Mammary epithelial cell (primary cell): ENCODE measurements at regions of chr6 and their contacts with region 1.

Region 1: DNA sequence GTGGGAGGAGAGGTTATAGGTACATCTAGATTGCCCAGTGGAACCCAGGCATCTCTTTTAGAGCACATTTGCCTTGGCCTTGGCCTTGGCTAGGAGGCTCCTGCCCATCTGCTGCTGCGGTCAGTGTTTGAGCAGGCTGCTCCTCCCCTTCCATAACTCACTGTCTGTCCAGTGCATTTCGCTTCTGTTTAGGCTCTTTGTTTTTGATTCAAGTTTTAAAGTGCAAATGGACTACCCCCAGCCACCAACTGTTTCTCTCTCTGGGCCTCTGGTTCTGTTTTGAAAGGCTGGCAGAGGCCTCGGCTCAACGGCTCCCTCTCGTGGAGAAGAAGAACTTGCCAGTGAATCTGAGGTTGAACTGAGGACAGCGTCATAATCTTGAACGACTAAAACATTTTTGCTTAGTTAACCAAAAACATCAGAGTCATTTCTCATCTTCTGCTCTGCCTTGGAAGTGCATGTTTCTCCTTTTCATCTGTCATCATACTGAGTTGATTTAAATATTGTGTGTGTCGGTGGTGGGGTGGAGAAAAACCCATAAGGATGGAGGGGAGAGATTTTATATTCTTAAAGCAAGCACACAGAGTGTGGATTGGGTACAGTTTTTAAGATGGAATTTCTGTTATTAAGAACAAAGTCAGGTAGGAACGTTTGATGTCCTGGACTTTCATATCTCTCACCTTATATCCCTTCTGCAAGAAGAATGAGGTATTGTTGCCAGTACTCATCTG is 171.4 kb downstream of the DTNBP1 start:
- DNase-seq: peak; percentile 29
- H3K4me3 ChIP-seq: no peak overlapping the region
- H3K27ac ChIP-seq: no peak overlapping the region
- H3K4me1 ChIP-seq: no peaks in the 10 kb centered on the region
- H3K27me3 ChIP-seq: no peaks in the 10 kb centered on the region
- CTCF ChIP-seq: peak; percentile 91 to 94

Region 2: GRCh38 chr6:14129575-14129974 is 1361.8 kb before region 1 on chr6:
- CTCF ChIA-PET with region 1: no interaction called
- dilution Hi-C with region 1: no loop called
- in situ Hi-C with region 1: no loop called
- intact Hi-C with region 1: loop called (anchors 5 kb)
- DNase-seq: peak; percentile 48
- H3K4me3 ChIP-seq: no peak overlapping the region
- H3K27ac ChIP-seq: no peak overlapping the region
- H3K4me1 ChIP-seq: no peaks in the 10 kb centered on the region
- H3K27me3 ChIP-seq: no peaks in the 10 kb centered on the region
- CTCF ChIP-seq: peak; percentile 38 to 59

Region 3: GRCh38 chr6:14192216-14192788 is 1299.1 kb before region 1 on chr6:
- CTCF ChIA-PET with region 1: no interaction called
- dilution Hi-C with region 1: no loop called
- in situ Hi-C with region 1: no loop called
- intact Hi-C with region 1: loop called (anchors 5 kb)
- DNase-seq: no peak
- H3K4me3 ChIP-seq: no peak overlapping the region
- H3K27ac ChIP-seq: no peak overlapping the region
- H3K4me1 ChIP-seq: no peaks in the 10 kb centered on the region
- H3K27me3 ChIP-seq: no peaks in the 10 kb centered on the region
- CTCF ChIP-seq: peak; percentile 21 to 32

Region 4: GRCh38 chr6:15327271-15327670 is 164.1 kb before region 1 on chr6:
- CTCF ChIA-PET with region 1: no interaction called
- dilution Hi-C with region 1: no loop called
- in situ Hi-C with region 1: no loop called
- intact Hi-C with region 1: loop called (anchors 5 kb)
- DNase-seq: no peak
- H3K4me3 ChIP-seq: no peak overlapping the region
- H3K27ac ChIP-seq: no peak overlapping the region
- H3K4me1 ChIP-seq: peaks cover 54% of the 10 kb centered on the region
- H3K27me3 ChIP-seq: no peaks in the 10 kb centered on the region
- CTCF ChIP-seq: peak in 1 of 2 donors; percentile 28

Region 5: DNA sequence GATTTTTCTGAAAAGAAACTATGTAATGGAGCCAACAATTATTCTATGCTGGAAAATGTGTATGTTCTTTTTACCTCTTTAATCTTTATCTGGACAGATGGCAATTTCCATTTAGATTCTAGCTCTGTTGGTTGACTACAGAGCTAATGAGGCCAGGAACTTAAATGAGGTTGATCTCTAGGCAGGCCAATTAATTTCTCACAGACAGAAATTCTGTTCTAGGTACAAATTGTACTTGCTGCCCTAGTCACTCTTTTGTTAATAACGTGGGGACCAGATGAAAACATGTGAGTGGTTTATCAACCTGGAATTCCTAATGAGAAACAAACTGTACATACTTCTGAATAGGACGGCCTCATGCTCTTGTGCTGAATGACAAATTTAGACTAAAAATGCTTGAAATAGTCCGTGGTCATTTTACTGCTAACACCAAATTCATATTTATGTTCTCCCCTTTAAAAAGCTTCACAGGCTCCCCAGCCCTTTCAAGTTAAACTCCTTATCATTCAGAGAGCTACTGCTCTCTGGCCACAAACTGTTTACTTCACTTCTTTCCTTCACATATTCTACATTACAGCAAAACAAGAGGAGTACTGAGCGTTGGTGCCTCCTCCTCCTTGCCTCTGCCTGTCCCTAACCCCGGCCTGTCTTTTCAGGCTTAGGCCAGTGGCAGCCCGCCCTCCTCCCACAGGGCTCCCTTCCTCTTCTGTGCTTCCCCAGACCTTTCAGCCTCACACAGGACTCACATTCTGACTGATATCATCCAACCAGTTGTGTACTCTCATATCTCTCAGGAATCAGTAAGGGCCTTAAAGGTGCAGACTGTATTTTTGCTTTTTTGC is 130.0 kb after region 1 on chr6:
- CTCF ChIA-PET with region 1: no interaction called
- dilution Hi-C with region 1: no loop called
- in situ Hi-C with region 1: no loop called
- intact Hi-C with region 1: loop called (anchors 5 kb)
- DNase-seq: peak; percentile 73
- H3K4me3 ChIP-seq: no peak overlapping the region
- H3K27ac ChIP-seq: peak overlapping the region; percentile 43
- H3K4me1 ChIP-seq: peaks cover 15% of the 10 kb centered on the region
- H3K27me3 ChIP-seq: no peaks in the 10 kb centered on the region
- CTCF ChIP-seq: no peak